AG04449 (cell line): ENCODE measurements at regions of chr3 and their contacts with region 1.

Region 1: DNA sequence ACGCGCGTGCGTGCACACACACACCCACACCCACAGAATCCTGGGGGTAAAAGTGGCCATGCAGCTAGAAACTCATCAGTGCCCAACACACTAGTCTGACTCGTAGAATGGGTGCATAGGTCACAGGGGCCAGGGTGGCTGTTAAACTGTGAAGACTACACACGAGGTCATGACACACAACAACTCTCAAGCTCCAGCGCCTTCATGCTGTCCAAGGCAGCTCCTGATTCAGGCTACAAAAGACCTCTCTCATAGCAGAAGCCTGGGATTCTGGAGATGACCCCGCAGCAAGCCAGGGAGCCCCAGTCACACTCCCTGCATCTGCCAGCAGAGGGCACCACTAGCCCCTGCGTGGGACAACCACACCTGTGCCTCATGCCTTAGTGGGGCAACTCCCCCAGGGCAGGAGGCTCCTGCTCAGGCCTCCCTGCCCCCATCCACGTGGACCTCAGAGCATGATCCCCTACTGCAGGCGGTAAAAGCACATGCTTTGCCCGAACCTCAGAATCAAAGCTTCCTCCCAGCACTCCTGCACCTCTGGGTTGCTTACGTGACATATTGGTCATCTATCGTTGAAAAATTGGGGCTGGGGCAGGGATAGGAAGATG is 93.1 kb downstream of the LRIG1 start:
- DNase-seq: no peak
- H3K4me3 ChIP-seq: no peak overlapping the region
- CTCF ChIP-seq: peak; percentile 93

Region 2: GRCh38 chr3:66179793-66180192 is 227.9 kb before region 1 on chr3:
- CTCF ChIA-PET with region 1: no interaction called
- POLR2A ChIA-PET with region 1: no interaction called
- DNase-seq: no peak
- H3K4me3 ChIP-seq: no peak overlapping the region
- CTCF ChIP-seq: no peak

Region 3: GRCh38 chr3:66383998-66384745 is 23.5 kb before region 1 on chr3:
- CTCF ChIA-PET with region 1: interaction called, 12 read pairs
- POLR2A ChIA-PET with region 1: no interaction called
- DNase-seq: no peak
- H3K4me3 ChIP-seq: no peak overlapping the region
- CTCF ChIP-seq: no peak

Region 4: DNA sequence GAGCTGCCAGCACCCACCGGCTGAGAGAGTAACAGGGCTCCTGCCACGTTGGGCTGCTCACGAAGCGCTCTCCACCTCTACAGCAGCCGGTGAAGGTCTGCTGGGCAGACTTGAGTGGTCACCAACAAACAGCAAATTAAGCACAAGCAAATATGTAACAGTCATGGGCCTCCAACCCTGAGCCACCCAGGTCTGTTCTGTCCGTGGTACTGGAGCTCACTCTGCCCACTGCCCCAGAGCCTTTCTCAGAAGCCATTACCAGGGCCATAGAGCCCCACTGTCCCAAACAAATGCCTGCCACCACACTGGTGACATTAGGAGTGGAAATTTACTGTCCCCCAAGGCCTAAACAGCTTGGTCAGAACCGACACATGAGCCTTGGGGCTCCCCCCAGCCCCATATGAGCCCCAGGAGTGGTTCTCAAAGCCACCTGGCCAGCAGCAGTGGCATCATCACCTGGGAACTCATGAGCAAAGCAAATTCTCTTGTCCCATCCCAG is 36.5 kb after region 1 on chr3:
- CTCF ChIA-PET with region 1: interaction called, 13 read pairs
- POLR2A ChIA-PET with region 1: no interaction called
- DNase-seq: no peak
- H3K4me3 ChIP-seq: no peak overlapping the region
- CTCF ChIP-seq: no peak

Region 5: GRCh38 chr3:66483406-66483906 is 75.7 kb after region 1 on chr3:
- CTCF ChIA-PET with region 1: interaction called, 29 read pairs
- POLR2A ChIA-PET with region 1: interaction called, 6 read pairs
- DNase-seq: no peak
- H3K4me3 ChIP-seq: no peak overlapping the region
- CTCF ChIP-seq: no peak

Region 6: DNA sequence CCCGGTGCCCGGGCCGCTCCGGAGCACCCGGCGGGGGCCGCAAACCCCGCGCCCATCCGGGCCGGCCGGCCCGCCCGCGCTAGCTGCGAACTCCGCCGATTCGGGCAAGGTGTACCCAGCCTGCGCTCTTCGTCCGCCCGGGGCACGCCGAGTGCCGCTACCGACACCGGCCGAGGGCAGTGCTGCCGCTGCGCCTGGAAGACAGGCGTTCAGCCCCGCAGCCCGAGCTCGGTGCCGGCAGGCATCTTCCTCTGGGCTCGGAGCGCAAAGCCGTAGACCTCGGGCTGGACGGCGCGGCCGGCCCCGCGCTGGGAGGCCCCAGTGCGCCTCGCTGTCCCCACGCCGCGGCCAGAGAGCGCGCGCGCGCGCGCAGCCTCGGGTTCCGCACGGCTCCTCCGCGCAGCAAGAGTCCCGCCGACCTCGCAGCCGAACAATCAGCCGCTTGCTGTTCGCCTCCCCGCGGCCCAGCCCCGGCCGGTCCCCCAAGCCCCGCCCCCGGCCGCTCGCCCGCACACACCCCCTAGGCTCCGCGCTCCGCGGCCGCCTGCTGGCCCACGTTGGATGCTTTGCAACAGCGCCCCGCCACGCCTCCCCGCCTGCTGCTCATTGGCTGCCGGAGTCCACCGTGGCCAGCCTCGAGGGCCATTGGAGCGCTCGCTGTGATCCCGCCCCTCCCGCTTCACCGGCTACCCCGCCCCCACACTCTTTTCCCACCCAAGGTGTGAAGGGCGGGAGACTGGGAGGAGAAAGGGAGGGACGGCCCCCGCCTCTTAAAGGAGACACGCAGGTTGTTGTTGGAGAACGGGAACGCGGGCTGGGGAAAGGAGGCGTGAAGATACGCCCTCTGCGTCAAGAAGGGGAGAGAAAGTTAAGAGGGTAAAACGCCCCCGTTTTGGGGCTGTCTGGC is 93.1 kb after region 1 on chr3 and contains the start of gene LRIG1:
- CTCF ChIA-PET with region 1: interaction called, 14 read pairs
- POLR2A ChIA-PET with region 1: no interaction called
- DNase-seq: peak; percentile 63
- H3K4me3 ChIP-seq: peak within 1 kb of the TSS; percentile 81
- CTCF ChIP-seq: peak; percentile 68

Region 7: GRCh38 chr3:66816090-66816761 is 408.5 kb after region 1 on chr3:
- CTCF ChIA-PET with region 1: interaction called, 248 read pairs
- POLR2A ChIA-PET with region 1: no interaction called
- DNase-seq: peak; percentile 36
- H3K4me3 ChIP-seq: no peak overlapping the region
- CTCF ChIP-seq: peak; percentile 24